ENCODE measurements at regions of chrX and their contacts with region 1.

Region 1: GRCh38 chrX:94435786-94436185 is 761.8 kb downstream of the FAM133A start:
- DNase-seq: no peak
- H3K4me3 ChIP-seq: no peak overlapping the region
- H3K27ac ChIP-seq: no peak overlapping the region
- H3K4me1 ChIP-seq: no peaks in the 10 kb centered on the region
- H3K27me3 ChIP-seq: no peaks in the 10 kb centered on the region
- CTCF ChIP-seq: no peak
- POLR2A ChIP-seq: no peak

Region 2: GRCh38 chrX:94400488-94400887 is 35.3 kb before region 1 on chrX:
- intact Hi-C with region 1: loop called (anchors 2 kb)
- DNase-seq: peak in 1 of 2 donors; percentile 72
- H3K4me3 ChIP-seq: no peak overlapping the region
- H3K27ac ChIP-seq: peak overlapping the region in 1 of 2 donors; percentile 57
- H3K4me1 ChIP-seq: no peaks in the 10 kb centered on the region
- H3K27me3 ChIP-seq: no peaks in the 10 kb centered on the region
- CTCF ChIP-seq: no peak
- POLR2A ChIP-seq: no peak

Region 3: DNA sequence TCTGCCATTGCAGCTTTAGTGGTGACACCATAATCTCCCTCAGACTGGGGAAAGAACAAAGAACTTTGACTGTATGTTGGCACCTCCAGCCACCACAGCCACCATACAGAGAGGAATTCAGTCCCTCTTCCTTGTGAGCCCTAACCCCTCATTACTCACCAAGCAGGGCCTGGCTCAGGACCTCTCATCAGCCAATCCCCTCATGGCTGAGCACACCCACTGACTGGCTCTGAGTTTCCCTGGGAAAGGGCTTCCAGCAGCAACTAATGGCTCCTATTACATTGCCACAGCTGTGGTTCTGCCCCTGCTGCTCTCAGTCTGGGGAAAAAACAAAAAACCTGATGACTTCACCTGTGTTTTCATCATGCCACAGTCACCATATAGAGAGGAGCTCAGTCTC is 720.8 kb after region 1 on chrX:
- intact Hi-C with region 1: no loop called
- DNase-seq: no peak
- H3K4me3 ChIP-seq: no peak overlapping the region
- H3K27ac ChIP-seq: no peak overlapping the region
- H3K4me1 ChIP-seq: no peaks in the 10 kb centered on the region
- H3K27me3 ChIP-seq: peaks cover 0 to 35% of the 10 kb centered on the region in 2 donors
- CTCF ChIP-seq: no peak
- POLR2A ChIP-seq: no peak

Measured in breast epithelium (tissue), 4 donors.